ENCODE measurements at regions of chr13 and their contacts with region 1.

Region 1: GRCh38 chr13:51070005-51070649 is 40.9 kb downstream of the C13orf42 start:
- DNase-seq: peak; percentile 57 to 84 (median 72)
- ATAC-seq: peak; percentile 85
- H3K4me3 ChIP-seq: no peak overlapping the region
- H3K4me3 Mint-ChIP-seq: no peak overlapping the region
- H3K27ac ChIP-seq: no peak overlapping the region
- H3K27ac Mint-ChIP-seq: no peak overlapping the region
- H3K4me1 ChIP-seq: peaks cover 9% of the 10 kb centered on the region
- H3K4me1 Mint-ChIP-seq: peaks cover 7% of the 10 kb centered on the region
- H3K27me3 ChIP-seq: peaks cover 6 to 18% of the 10 kb centered on the region in 2 experiments
- H3K27me3 Mint-ChIP-seq: peaks cover 26% of the 10 kb centered on the region
- CTCF ChIP-seq: peak; percentile 93

Region 2: GRCh38 chr13:49669735-49670309 is 1400.3 kb before region 1 on chr13:
- CTCF ChIA-PET with region 1: no interaction called
- POLR2A ChIA-PET with region 1: no interaction called
- intact Hi-C with region 1: loop called (anchors 1 kb)
- DNase-seq: peak in 8 of 14 experiments; percentile 4 to 52 (median 28)
- ATAC-seq: peak; percentile 64
- H3K4me3 ChIP-seq: no peak overlapping the region
- H3K4me3 Mint-ChIP-seq: no peak overlapping the region
- H3K27ac ChIP-seq: no peak overlapping the region
- H3K27ac Mint-ChIP-seq: no peak overlapping the region
- H3K4me1 ChIP-seq: no peaks in the 10 kb centered on the region
- H3K4me1 Mint-ChIP-seq: peaks cover 5% of the 10 kb centered on the region
- H3K27me3 ChIP-seq: no peaks in the 10 kb centered on the region
- H3K27me3 Mint-ChIP-seq: no peaks in the 10 kb centered on the region
- CTCF ChIP-seq: peak; percentile 59

Region 3: DNA sequence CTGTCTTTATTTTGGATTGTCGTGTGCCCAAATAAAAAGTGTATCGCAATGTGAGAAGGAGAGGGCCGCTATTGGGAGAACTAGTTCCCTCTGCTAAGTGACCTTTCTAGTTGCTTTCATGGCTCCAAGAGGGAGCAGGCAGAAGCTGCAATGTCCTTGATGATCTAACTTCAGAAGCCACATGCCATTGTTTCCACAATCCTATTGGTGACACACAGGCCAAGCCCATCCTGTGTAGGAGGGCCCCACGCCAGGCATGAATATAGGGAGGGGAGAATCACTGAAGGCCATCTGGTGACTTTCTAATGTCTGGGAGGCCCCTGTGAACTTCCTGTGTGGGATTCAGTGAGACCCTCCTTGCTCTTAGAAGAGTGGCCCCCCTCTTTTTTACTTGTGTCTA is 1229.9 kb before region 1 on chr13:
- CTCF ChIA-PET with region 1: no interaction called
- POLR2A ChIA-PET with region 1: no interaction called
- intact Hi-C with region 1: loop called in 1 of 2 experiments (anchors 10 kb)
- DNase-seq: no peak
- ATAC-seq: no peak
- H3K4me3 ChIP-seq: no peak overlapping the region
- H3K4me3 Mint-ChIP-seq: no peak overlapping the region
- H3K27ac ChIP-seq: no peak overlapping the region
- H3K27ac Mint-ChIP-seq: no peak overlapping the region
- H3K4me1 ChIP-seq: no peaks in the 10 kb centered on the region
- H3K4me1 Mint-ChIP-seq: no peaks in the 10 kb centered on the region
- H3K27me3 ChIP-seq: no peaks in the 10 kb centered on the region
- H3K27me3 Mint-ChIP-seq: no peaks in the 10 kb centered on the region
- CTCF ChIP-seq: no peak

Region 4: DNA sequence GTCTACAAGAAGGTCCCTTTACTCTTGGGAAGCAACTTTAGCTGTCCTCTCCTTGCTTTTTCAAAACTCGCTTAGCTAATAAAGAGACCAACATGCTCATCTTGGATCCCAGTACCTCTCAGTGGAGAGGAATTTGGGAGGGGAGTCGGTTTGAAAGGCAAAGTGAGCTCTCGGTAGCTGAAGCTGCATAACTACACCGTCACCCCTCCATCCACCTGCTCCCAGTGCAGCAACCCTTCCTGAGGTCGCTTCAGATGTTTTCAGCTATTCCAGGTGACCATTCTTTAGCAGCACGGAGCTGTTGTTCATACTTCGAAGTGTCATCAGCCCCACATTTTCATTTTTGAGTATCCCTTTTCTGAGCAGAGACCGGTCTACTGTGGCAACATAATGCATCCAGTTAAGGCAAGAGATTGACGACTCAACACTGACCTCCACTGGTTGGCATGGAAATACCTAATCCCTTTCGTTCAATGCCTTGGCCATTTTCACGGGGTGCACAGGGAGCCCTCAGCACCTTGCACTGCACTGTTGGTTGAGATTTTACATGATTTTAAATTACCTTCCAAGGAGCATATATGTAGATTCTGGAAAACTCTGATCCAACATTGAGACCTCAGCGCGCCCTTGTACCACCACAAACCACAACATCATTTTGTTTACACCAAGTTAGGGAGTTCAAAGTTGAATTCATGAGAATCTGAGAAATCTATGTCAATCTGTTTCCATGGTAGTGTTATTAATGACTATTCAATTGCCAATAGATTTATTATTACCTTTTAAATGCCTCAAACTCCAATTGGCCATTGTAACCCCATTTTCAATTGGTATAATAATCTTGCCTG is 268.8 kb before region 1 on chr13:
- CTCF ChIA-PET with region 1: no interaction called
- POLR2A ChIA-PET with region 1: no interaction called
- intact Hi-C with region 1: loop called in 1 of 2 experiments (anchors 1 kb)
- DNase-seq: peak; percentile 19 to 85 (median 48)
- ATAC-seq: peak; percentile 88
- H3K4me3 ChIP-seq: no peak overlapping the region
- H3K4me3 Mint-ChIP-seq: no peak overlapping the region
- H3K27ac ChIP-seq: no peak overlapping the region
- H3K27ac Mint-ChIP-seq: no peak overlapping the region
- H3K4me1 ChIP-seq: peaks cover 6% of the 10 kb centered on the region
- H3K4me1 Mint-ChIP-seq: peaks cover 7% of the 10 kb centered on the region
- H3K27me3 ChIP-seq: no peaks in the 10 kb centered on the region
- H3K27me3 Mint-ChIP-seq: no peaks in the 10 kb centered on the region
- CTCF ChIP-seq: peak; percentile 75

Region 5: GRCh38 chr13:50936679-50937078 is 133.4 kb before region 1 on chr13:
- CTCF ChIA-PET with region 1: no interaction called
- POLR2A ChIA-PET with region 1: no interaction called
- intact Hi-C with region 1: no loop called
- DNase-seq: peak in 2 of 14 experiments; percentile 22 to 39
- ATAC-seq: no peak
- H3K4me3 ChIP-seq: no peak overlapping the region
- H3K4me3 Mint-ChIP-seq: no peak overlapping the region
- H3K27ac ChIP-seq: no peak overlapping the region
- H3K27ac Mint-ChIP-seq: no peak overlapping the region
- H3K4me1 ChIP-seq: no peaks in the 10 kb centered on the region
- H3K4me1 Mint-ChIP-seq: no peaks in the 10 kb centered on the region
- H3K27me3 ChIP-seq: no peaks in the 10 kb centered on the region
- H3K27me3 Mint-ChIP-seq: no peaks in the 10 kb centered on the region
- CTCF ChIP-seq: no peak